GM12878 (cell line): ENCODE measurements at regions of chr16 and their contacts with region 1.

Region 1: DNA sequence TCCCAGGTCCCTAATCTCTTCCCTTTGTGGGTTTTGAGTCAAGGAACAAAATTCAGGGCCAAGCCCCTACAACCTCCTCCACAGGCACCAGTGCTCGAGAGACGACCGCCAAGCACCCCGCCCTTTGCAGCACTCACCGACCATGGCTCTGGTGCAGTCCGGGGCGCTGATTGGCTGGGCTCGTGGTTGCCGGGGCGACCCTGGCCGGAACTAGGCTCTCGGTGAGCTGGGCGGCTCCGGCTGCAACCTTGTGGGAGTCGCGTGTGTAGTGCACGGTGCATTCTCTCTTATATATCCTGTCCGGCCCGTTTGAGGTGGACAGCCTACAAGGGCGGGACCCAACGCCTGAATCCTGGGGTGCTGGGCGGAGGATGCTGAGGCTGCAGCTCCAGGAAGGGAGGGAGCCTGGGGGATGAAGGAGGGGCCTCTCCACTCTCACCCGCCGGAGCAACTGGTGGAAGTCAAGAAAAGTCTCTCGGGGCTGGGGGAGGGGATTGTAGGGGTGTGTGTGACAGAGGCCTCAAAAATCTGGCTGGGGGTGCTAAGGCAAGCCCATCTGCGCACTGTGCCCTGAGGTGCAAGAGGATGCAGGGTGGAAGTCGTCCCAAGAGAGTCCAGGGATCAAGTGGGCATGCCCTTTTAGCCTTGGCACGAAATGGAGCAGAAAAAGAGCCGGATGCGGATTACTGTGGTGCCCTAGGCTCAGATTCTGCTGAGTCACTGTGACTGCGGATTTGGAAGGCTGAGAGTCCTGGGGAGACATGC is at the start of gene NQO1:
- DNase-seq: peak; percentile 81
- ATAC-seq: peak; percentile 99
- H3K4me3 ChIP-seq: peak within 1 kb of the TSS; percentile 78
- H3K27ac ChIP-seq: peak within 1 kb of the TSS; percentile 92
- H3K4me1 ChIP-seq: no peaks in the 10 kb centered on the region; the same call in none of the 2 replicates
- H3K27me3 ChIP-seq: no peaks in the 10 kb centered on the region
- CTCF ChIP-seq: no peak
- EP300 ChIP-seq: no peak
- POLR2A ChIP-seq: peak; percentile 92
- RAD21 ChIP-seq: no peak
- polyA plus RNA-seq, gene NQO1: 35.2 to 40.0 TPM

Region 2: GRCh38 chr16:69339289-69340108 is 387.0 kb before region 1 on chr16 and contains the starts of genes COG8 and NIP7:
- CTCF ChIA-PET with region 1: no interaction called
- POLR2A ChIA-PET with region 1: no interaction called
- RAD21 ChIA-PET with region 1: no interaction called
- SMC1A ChIA-PET with region 1: no interaction called
- in situ Hi-C with region 1: no loop called
- intact Hi-C with region 1: no loop called
- DNase-seq: peak; percentile 92
- ATAC-seq: peak; percentile 97
- H3K4me3 ChIP-seq: peak within 1 kb of the TSS; percentile 91
- H3K27ac ChIP-seq: peak within 1 kb of the TSS; percentile 85
- H3K4me1 ChIP-seq: peaks cover 5% of the 10 kb centered on the region
- H3K27me3 ChIP-seq: no peaks in the 10 kb centered on the region
- CTCF ChIP-seq: peak; percentile 70 to 83 (median 80)
- EP300 ChIP-seq: 0 out of 4 replicates have a peak, but pooled peaks of 1 of the 2 experiments have one; percentile 28
- POLR2A ChIP-seq: peak; percentile 98
- RAD21 ChIP-seq: no peak
- polyA plus RNA-seq, gene COG8: 2.8 to 3.1 TPM
- polyA plus RNA-seq, gene NIP7: 57.8 to 62.9 TPM

Region 3: DNA sequence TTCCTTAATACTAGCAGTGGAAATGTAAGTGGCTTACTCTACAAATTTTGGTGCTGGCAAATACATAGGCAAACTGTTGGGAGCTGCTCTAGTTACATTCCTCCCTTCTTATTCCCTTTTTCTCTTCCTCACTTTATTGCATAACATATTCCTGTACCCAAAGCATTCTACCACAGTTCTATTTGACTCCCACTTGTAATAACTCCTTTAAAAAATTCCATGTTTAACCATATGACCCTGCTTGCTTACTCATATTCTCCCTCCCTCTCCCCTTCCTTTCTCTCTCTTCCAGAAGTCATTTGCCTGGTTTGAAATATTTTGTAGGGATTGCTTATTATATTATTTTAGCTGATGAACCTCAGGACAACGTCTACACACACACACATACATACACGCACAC is 22.8 kb before region 1 on chr16:
- CTCF ChIA-PET with region 1: interaction called, 42 read pairs
- POLR2A ChIA-PET with region 1: interaction called, 3 read pairs
- RAD21 ChIA-PET with region 1: interaction called, 3 read pairs
- SMC1A ChIA-PET with region 1: interaction called, 4 read pairs
- in situ Hi-C with region 1: no loop called
- intact Hi-C with region 1: no loop called
- DNase-seq: no peak
- ATAC-seq: no peak
- H3K4me3 ChIP-seq: no peak overlapping the region
- H3K27ac ChIP-seq: no peak overlapping the region
- H3K4me1 ChIP-seq: no peaks in the 10 kb centered on the region
- H3K27me3 ChIP-seq: no peaks in the 10 kb centered on the region
- CTCF ChIP-seq: no peak
- EP300 ChIP-seq: no peak
- POLR2A ChIP-seq: no peak
- RAD21 ChIP-seq: no peak

Region 4: DNA sequence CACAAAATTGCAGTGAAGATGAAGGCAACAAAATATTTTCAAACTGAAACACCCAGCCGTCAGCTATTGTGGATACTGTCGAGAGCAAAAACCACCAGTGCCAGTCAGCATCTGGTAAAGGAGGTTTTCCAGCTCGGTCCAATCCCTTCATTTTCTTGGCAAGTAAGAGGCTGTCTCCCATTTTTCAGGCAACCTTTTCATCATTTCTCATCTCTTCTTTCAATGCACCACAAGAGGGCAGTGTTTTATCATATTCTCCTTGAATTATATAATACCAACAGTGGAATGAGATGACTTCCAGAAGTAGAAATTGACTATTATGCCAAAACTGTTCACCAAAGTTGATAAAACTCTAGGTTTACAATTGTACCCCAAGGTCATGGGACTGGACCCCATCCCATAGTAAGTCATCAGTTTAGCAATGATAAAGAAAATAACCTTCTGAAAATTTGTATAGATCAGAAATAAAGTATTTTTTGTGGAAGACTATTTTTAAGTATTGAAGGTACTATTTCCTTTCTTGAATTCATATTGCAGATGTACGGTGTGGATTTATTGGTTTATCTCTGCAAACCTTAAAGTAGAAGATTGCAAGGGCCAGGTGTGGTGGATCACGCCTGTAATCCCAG is 16.9 kb before region 1 on chr16:
- CTCF ChIA-PET with region 1: interaction called, 42 read pairs
- POLR2A ChIA-PET with region 1: interaction called, 4 read pairs
- RAD21 ChIA-PET with region 1: interaction called, 3 read pairs
- SMC1A ChIA-PET with region 1: interaction called, 7 read pairs
- in situ Hi-C with region 1: no loop called
- intact Hi-C with region 1: no loop called
- DNase-seq: peak; percentile 15
- ATAC-seq: peak; percentile 83
- H3K4me3 ChIP-seq: no peak overlapping the region
- H3K27ac ChIP-seq: no peak overlapping the region
- H3K4me1 ChIP-seq: no peaks in the 10 kb centered on the region
- H3K27me3 ChIP-seq: no peaks in the 10 kb centered on the region
- CTCF ChIP-seq: peak; percentile 43 to 74 (median 64); a peak in 5 of 6 replicates
- EP300 ChIP-seq: no peak
- POLR2A ChIP-seq: no peak
- RAD21 ChIP-seq: peak; percentile 73

Region 5: DNA sequence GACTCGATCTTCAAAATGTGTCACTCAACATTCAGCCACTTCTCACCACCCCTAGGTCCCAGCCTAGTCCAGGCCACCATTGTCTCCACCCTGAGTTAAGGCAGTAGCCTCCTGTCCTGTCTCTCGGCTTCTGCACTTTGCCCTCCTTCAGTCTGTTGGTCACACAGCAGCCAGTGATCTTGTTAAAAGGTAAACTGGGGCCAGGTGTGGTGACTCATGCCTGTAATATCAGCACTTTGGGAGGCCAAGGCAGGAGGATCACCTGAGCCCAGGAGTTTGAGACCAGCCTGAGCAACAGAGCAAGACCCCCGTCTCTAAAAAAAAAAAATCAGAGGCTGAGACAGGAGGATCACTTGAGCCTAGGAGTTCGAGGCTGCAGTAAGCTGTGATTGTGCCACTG is 61.4 kb after region 1 on chr16:
- CTCF ChIA-PET with region 1: no interaction called
- POLR2A ChIA-PET with region 1: no interaction called
- RAD21 ChIA-PET with region 1: no interaction called
- SMC1A ChIA-PET with region 1: no interaction called
- in situ Hi-C with region 1: no loop called
- intact Hi-C with region 1: no loop called
- DNase-seq: no peak
- ATAC-seq: no peak
- H3K4me3 ChIP-seq: no peak overlapping the region
- H3K27ac ChIP-seq: no peak overlapping the region
- H3K4me1 ChIP-seq: no peaks in the 10 kb centered on the region
- H3K27me3 ChIP-seq: no peaks in the 10 kb centered on the region
- CTCF ChIP-seq: no peak
- EP300 ChIP-seq: no peak
- POLR2A ChIP-seq: no peak
- RAD21 ChIP-seq: no peak